ENCODE measurements at regions of chr2 and their contacts with region 1.

Region 1: GRCh38 chr2:219057709-219058540 is 2.8 kb downstream of the IHH start:
- DNase-seq: peak; percentile 77
- H3K4me3 ChIP-seq: peak overlapping the region in 1 of 2 donors; percentile 11
- H3K27ac ChIP-seq: no peak overlapping the region
- H3K4me1 ChIP-seq: peaks cover 20% of the 10 kb centered on the region
- H3K27me3 ChIP-seq: no peaks in the 10 kb centered on the region
- CTCF ChIP-seq: peak; percentile 78 to 87 (median 87)
- POLR2A ChIP-seq: no peak

Region 2: DNA sequence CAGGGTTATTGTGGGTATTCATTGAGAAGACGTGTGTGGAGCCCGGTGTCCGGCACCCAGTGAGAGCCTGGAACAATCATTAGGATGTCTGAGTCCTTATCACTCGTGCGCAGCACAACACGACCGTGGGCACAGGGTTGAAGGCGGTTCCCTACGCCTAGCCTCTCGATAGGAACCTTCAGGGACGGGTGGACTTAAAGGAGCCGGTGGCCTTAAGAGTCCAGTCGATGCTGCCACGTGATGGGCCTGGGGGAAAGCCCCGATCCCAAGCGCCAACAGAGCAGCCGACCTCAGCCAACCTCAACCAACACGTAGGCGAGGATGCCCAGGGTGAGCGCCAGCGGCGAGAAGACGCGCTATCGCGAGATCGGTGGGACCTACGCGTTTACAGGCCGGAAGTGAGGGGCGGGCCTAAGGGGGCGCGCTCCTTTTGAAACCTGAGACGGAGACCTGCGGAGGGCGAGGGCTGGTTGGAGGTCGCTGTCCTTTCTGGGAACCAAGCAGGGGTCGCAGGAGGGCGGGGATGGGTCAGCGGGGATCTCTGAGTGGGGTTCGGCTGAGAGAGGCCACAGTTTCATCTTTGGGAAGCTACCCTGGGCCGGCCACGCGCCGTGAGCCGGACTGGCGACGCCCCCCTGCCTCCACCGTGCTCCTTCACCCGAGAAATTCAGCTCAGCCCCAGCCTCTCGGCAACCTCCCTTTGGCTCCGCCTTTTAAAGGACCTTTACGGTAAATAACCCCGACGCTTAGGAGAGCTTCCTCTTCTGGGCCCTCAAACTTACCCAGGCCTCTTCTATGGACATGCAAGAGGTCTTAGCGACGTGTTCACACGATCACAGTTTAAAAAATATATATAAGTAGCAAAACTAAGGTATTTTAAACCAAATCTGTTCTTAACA is 149.0 kb before region 1 on chr2:
- intact Hi-C with region 1: no loop called
- DNase-seq: peak; percentile 95
- H3K4me3 ChIP-seq: peak overlapping the region; percentile 59 to 72
- H3K27ac ChIP-seq: no peak overlapping the region
- H3K4me1 ChIP-seq: peaks cover 4% of the 10 kb centered on the region
- H3K27me3 ChIP-seq: no peaks in the 10 kb centered on the region
- CTCF ChIP-seq: no peak
- POLR2A ChIP-seq: no peak

Region 3: DNA sequence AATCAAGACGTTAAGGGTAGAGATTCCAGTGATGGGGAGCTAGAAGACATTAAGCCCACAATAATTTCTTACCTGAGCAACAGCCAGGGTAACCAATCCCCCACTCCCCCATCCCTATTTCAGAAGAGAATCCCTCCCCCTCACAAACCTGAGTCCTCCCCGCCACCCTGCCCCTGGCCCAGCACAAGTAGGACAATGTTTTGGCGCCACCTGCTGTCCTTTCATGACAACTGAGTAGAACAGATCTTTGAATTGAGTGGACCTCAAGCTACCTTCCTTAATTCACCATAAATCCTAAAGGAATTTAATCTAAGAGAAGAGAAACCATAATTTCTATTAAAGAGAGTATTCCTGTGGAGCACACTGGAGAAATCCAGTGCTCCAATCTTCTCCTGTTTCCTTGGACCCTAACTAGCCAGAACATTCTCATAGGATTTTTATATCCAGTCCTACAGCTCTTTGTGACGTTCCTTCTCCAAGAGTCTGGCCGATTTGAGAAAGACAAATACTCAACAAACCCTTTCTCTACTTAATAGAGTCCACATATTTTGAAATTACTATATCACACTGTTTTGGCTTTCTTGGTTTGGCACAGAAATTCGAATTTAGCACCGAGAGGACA is 61.6 kb after region 1 on chr2:
- intact Hi-C with region 1: loop called (anchors 10 kb)
- DNase-seq: peak; percentile 82
- H3K4me3 ChIP-seq: no peak overlapping the region
- H3K27ac ChIP-seq: no peak overlapping the region
- H3K4me1 ChIP-seq: peaks cover 3% of the 10 kb centered on the region
- H3K27me3 ChIP-seq: no peaks in the 10 kb centered on the region
- CTCF ChIP-seq: peak; percentile 43 to 64 (median 51)
- POLR2A ChIP-seq: no peak

Region 4: GRCh38 chr2:219155054-219155644 is 97.2 kb after region 1 on chr2:
- intact Hi-C with region 1: loop called (anchors 10 kb)
- DNase-seq: peak; percentile 49
- H3K4me3 ChIP-seq: no peak overlapping the region
- H3K27ac ChIP-seq: no peak overlapping the region
- H3K4me1 ChIP-seq: no peaks in the 10 kb centered on the region
- H3K27me3 ChIP-seq: no peaks in the 10 kb centered on the region
- CTCF ChIP-seq: peak; percentile 62 to 75 (median 68)
- POLR2A ChIP-seq: no peak